Dendritic cell treated with granulocyte-macrophage colony-stimulating factor and Interleukin-4, amounts not matched to agents 40 ng/mL and 50 ng/mL, for 4 days (primary cell): ENCODE measurements at regions of chr20 and their contacts with region 1.

Region 1: DNA sequence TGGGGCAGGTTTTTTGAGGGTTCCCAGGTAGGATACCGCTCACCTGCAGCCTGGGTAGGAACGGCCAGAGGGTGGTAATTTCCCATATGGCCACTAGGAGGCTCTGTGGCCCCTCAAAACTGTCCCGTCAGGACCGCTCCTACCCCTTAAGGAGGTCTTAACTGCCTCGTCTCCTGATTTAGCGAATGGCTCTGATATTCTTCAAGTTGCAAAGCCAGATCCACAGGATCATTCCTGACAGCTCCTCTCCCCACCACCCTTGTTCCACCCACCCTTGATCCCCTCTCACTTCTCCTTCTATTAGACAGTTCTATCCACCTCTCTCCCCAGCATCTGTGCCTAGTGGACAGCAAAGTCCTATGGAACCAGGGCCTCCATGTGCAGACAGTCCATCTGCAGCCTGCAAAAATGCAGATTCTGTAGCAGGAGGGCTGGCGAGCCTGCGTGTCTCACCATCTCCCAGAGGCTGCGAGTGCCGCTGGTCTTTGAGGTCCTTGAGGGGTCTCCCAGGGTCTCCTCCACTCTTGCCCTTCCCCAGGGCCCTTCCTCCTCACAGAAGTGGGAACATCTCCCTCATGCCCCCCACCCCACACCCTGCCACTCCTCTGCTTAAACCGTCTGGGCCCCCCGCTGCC is 34.3 kb upstream of the ZBP1 start:
- H3K4me3 Mint-ChIP-seq: no peak overlapping the region
- H3K27ac Mint-ChIP-seq: no peak overlapping the region
- H3K4me1 Mint-ChIP-seq: peaks cover 5% of the 10 kb centered on the region
- H3K27me3 Mint-ChIP-seq: peaks cover 9% of the 10 kb centered on the region

Region 2: DNA sequence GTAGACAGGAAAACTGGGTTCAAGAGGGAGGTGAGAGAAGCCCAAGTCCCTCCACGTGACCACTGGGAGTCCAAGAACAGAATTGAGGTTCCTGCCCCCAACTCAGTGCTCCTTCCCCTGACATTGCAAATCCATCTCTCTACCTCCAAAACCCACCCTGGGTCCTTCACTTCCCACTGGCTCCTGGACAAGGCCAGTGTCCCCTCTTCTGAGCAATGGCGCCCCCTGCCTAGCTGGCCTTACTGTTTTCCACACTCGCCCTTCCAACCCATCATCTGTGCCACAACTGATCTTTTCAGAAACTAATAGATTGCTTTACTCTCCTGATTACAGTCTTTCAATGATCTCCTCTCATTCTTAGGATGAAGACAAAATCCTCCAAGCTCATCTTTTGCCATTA is 373.6 kb after region 1 on chr20:
- intact Hi-C with region 1: loop called (anchors 2 kb)
- H3K4me3 Mint-ChIP-seq: no peak overlapping the region
- H3K27ac Mint-ChIP-seq: no peak overlapping the region
- H3K4me1 Mint-ChIP-seq: no peaks in the 10 kb centered on the region
- H3K27me3 Mint-ChIP-seq: peaks cover 16% of the 10 kb centered on the region

Region 3: DNA sequence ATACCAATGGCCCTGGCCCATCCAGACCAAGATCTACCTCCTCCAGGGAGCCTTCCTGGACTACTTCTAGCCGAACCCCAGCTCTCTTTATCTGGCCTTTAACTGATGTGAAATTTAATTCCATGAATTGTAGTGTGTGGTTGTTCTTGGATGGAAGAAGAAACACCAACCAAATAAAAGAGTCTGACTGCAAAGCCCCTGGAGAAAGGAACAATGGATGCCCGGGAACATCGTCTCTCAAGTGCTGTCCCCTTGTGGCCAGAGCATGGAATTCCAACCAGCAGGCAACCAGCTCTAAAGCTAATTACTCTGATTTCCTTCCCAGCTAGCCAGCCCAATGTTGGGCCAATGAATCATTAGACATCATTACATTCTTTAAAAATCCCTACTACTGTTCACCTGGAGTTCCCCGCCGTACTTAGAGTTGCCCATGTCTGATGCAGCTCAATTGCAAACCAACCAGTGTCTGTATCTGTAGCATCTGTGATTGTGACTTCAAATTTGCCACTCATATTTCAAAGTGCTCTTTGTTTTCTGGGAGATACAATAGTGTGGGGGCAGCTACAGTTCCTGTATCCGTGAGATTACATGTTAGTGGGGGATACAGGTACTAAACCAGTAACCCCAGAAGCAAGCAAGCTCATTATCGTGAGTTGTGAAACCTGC is 432.8 kb after region 1 on chr20:
- intact Hi-C with region 1: loop called (anchors 2 kb)
- H3K4me3 Mint-ChIP-seq: no peak overlapping the region
- H3K27ac Mint-ChIP-seq: no peak overlapping the region
- H3K4me1 Mint-ChIP-seq: no peaks in the 10 kb centered on the region
- H3K27me3 Mint-ChIP-seq: no peaks in the 10 kb centered on the region

Region 4: GRCh38 chr20:58179432-58180099 is 525.1 kb after region 1 on chr20:
- intact Hi-C with region 1: loop called (anchors 1 kb)
- H3K4me3 Mint-ChIP-seq: peak overlapping the region; percentile 54
- H3K27ac Mint-ChIP-seq: no peak overlapping the region
- H3K4me1 Mint-ChIP-seq: peaks cover 14% of the 10 kb centered on the region
- H3K27me3 Mint-ChIP-seq: peaks cover 46% of the 10 kb centered on the region